Right ventricle myocardium inferior (tissue), 1 donor: ENCODE measurements at regions of chr12 and their contacts with region 1.

Region 1: DNA sequence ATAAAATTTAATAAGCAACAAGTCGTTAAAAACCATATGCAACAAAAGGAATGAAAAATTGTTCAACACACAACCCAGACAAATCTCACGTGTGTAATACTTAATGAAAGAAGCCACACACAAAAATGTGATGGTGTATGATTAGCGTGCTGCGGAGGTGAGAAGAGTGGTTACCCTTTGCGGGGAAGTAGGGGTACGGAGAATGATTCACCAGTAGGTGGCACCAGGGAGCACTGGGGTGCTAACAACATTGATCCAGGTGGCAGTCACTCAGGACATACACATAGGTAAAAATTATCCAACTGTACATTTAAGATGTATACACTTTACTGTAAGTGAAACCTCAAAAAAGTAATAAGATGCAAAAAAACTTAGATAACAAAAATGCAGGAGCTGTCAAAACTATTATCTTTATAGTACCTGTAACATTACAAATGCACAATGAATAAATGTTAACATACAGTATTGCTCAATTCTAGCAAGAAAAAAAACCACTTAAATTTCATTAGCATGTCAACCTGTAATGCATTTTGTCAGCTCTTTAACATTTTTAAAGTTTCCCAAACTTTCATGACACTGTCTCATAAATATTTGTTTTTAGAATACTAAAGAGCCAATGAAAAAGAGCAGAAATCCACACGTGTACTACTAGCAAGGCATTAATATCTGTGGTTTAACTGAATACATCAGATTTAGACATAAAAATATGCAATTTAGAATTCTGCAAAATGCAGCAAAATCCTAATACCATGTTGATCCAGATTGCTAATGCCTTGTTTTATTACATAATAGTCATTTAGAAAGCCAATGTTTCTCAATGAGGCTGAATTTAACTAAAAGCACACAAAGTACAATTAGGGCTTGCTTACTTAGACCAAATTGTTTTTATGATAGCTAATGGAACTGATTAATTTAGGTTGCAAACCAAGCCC is 46.7 kb downstream of the TMCC3 start:
- DNase-seq: peak; percentile 76
- ATAC-seq: no peak

Region 2: GRCh38 chr12:94762259-94762942 is 158.7 kb after region 1 on chr12:
- intact Hi-C with region 1: loop called (anchors 5 kb)
- DNase-seq: no peak
- ATAC-seq: no peak

Region 3: DNA sequence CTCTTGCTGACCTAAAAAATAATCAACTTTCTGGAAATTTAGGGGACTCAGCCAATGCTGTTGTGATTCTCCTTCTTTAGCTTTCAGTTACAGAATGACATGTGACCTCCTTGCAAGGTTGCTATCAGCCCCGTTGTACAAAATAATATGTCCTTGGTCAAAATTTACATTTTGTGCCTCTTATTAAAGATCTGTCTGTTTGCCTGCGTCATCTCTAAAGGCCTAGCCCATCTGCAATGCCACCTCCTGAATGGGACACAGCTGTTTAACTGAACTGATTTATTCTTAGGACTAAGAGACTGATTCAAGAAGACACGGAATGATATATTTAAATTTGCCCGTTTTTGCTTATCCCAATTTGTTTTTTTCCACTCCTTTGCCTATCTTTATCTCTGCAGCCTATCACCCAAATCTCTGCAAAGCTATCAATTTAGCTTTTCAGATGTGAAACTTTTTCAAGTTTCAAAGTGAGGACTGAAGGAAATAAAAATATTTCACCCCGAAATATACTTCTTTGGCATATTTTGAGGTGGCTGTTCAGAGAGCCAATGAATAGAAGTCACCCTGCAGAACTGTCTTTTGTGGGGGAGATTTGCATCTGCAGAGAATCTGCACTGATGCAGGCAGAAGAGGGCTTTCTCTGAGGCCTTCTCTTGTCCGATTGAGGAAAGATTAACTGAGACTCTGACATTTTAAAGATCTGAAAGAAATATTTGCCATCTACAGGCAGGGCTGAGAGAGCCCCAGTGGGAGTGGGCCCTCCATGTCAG is 739.9 kb after region 1 on chr12:
- intact Hi-C with region 1: loop called (anchors 10 kb)
- DNase-seq: no peak
- ATAC-seq: no peak